ENCODE measurements at regions of chrX and their contacts with region 1.

Region 1: GRCh38 chrX:37825209-37825842 is 22.0 kb downstream of the DYNLT3 start:
- DNase-seq: no peak
- ATAC-seq: peak; percentile 49

Region 2: GRCh38 chrX:37509349-37509748 is 316.0 kb before region 1 on chrX:
- intact Hi-C with region 1: loop called (anchors 5 kb)
- DNase-seq: no peak
- ATAC-seq: no peak

Region 3: DNA sequence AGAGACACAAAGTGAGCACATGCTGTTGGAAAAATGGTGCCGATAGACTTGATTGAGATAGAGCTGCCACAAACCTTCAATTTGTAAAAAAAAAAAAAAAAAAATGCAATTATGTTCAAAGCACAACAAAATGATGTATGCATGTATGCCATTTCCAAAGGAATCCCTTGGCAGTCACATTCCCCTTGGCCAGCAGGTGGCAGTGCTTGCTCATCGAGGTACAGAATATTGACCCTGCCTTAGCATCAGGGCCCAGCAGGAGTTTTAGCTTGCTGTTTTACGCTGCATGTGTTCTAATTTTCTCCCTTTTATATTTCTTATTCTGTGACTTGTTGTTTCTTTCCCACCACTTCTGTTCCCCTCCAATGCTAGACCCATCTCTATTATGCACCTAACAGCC is 80.0 kb before region 1 on chrX:
- intact Hi-C with region 1: loop called (anchors 10 kb)
- DNase-seq: peak; percentile 78
- ATAC-seq: peak; percentile 87